Activated CD4-positive, alpha-beta memory T cell treated with anti-CD3 and anti-CD28 coated beads for 36 hours (primary cell): ENCODE measurements at regions of chr10 and their contacts with region 1.

Region 1: GRCh38 chr10:14837757-14838581 is at the starts of genes CDNF, HSPA14 and MSANTD7:
- DNase-seq: peak; percentile 100
- H3K4me3 Mint-ChIP-seq: peak within 1 kb of the TSS; percentile 93
- H3K27ac Mint-ChIP-seq: peak within 1 kb of the TSS; percentile 94
- H3K4me1 Mint-ChIP-seq: peaks cover 21% of the 10 kb centered on the region
- H3K27me3 Mint-ChIP-seq: no peaks in the 10 kb centered on the region
- total RNA-seq, gene CDNF: 1.6 to 1.8 TPM
- total RNA-seq, gene HSPA14: 31.1 to 31.2 TPM
- total RNA-seq, gene MSANTD7: 16.1 to 18.1 TPM

Region 2: GRCh38 chr10:14500172-14500765 is 337.7 kb before region 1 on chr10:
- CTCF ChIA-PET with region 1: interaction called, 12 read pairs
- POLR2A ChIA-PET with region 1: no interaction called
- intact Hi-C with region 1: loop called (anchors 5 kb)
- DNase-seq: no peak
- H3K4me3 Mint-ChIP-seq: no peak overlapping the region
- H3K27ac Mint-ChIP-seq: no peak overlapping the region
- H3K4me1 Mint-ChIP-seq: peaks cover 2% of the 10 kb centered on the region
- H3K27me3 Mint-ChIP-seq: no peaks in the 10 kb centered on the region

Region 3: GRCh38 chr10:14543046-14543903 is 294.7 kb before region 1 on chr10:
- CTCF ChIA-PET with region 1: interaction called, 19 read pairs
- POLR2A ChIA-PET with region 1: interaction called, 6 read pairs
- intact Hi-C with region 1: no loop called
- DNase-seq: peak; percentile 58
- H3K4me3 Mint-ChIP-seq: peak overlapping the region; percentile 52
- H3K27ac Mint-ChIP-seq: peak overlapping the region; percentile 91
- H3K4me1 Mint-ChIP-seq: peaks cover 81% of the 10 kb centered on the region
- H3K27me3 Mint-ChIP-seq: no peaks in the 10 kb centered on the region

Region 4: GRCh38 chr10:14812271-14812670 is 25.7 kb before region 1 on chr10:
- CTCF ChIA-PET with region 1: no interaction called
- POLR2A ChIA-PET with region 1: no interaction called
- intact Hi-C with region 1: no loop called
- DNase-seq: no peak
- H3K4me3 Mint-ChIP-seq: no peak overlapping the region
- H3K27ac Mint-ChIP-seq: no peak overlapping the region
- H3K4me1 Mint-ChIP-seq: peaks cover 21% of the 10 kb centered on the region
- H3K27me3 Mint-ChIP-seq: no peaks in the 10 kb centered on the region

Region 5: GRCh38 chr10:14878266-14879054 is 40.5 kb after region 1 on chr10 and contains the start of gene SUV39H2:
- CTCF ChIA-PET with region 1: interaction called, 12 read pairs
- POLR2A ChIA-PET with region 1: interaction called, 29 read pairs
- intact Hi-C with region 1: loop called (anchors 1 kb)
- DNase-seq: peak; percentile 96
- H3K4me3 Mint-ChIP-seq: peak within 1 kb of the TSS; percentile 94
- H3K27ac Mint-ChIP-seq: peak within 1 kb of the TSS; percentile 80
- H3K4me1 Mint-ChIP-seq: peaks cover 41% of the 10 kb centered on the region
- H3K27me3 Mint-ChIP-seq: no peaks in the 10 kb centered on the region
- total RNA-seq, gene SUV39H2: 38.7 to 39.8 TPM